PC-3 (cell line): ENCODE measurements at regions of chr22 and their contacts with region 1.

Region 1: GRCh38 chr22:25465949-25466348 is 98.5 kb upstream of the GRK3 start:
- DNase-seq: no peak
- ATAC-seq: no peak
- H3K4me3 ChIP-seq: no peak overlapping the region
- H3K27ac ChIP-seq: no peak overlapping the region
- H3K4me1 ChIP-seq: no peaks in the 10 kb centered on the region
- H3K27me3 ChIP-seq: no peaks in the 10 kb centered on the region
- CTCF ChIP-seq: no peak

Region 2: GRCh38 chr22:25362215-25362882 is 103.6 kb before region 1 on chr22:
- CTCF ChIA-PET with region 1: no interaction called
- POLR2A ChIA-PET with region 1: no interaction called
- intact Hi-C with region 1: no loop called
- DNase-seq: peak; percentile 53
- ATAC-seq: peak; percentile 57
- H3K4me3 ChIP-seq: no peak overlapping the region
- H3K27ac ChIP-seq: no peak overlapping the region
- H3K4me1 ChIP-seq: no peaks in the 10 kb centered on the region
- H3K27me3 ChIP-seq: no peaks in the 10 kb centered on the region
- CTCF ChIP-seq: peak; percentile 83

Region 3: DNA sequence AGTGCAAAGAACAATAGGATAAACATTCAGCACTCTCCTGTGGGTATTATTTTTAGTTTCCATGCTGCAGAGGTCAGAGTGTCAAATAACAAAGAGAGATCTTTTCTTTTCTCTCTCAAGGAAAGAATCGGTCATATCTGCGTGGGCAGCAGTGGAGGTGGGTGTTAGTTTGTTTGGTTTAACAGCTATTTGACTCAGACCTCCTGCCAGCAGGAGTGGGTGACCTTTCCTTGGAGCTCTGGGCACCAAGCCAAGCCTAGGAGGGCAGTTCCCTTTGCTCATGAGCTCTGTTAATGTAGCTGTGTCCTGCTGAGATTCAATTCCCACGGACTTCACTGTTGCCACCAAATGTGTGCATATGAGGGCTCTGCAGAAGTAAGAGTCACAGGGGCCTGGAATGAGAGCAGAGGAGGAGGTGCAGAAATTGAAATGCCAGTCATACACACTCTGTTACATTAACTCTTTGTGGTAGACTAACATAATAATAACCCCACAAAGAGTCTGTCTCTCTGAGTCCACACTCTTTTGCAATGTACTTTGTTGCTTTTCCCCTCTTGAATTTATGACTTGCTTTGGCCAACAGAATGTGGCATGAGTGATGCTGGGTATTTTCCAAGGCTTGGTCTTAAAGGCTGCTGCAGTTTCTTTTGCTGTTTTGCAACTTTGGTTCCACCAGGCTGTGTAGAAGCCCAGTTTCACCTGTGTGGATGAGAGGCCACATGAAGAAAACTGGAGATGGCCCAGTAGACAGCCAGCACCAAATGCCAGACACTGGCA is 22.5 kb after region 1 on chr22:
- CTCF ChIA-PET with region 1: no interaction called
- POLR2A ChIA-PET with region 1: no interaction called
- intact Hi-C with region 1: no loop called
- DNase-seq: peak; percentile 70
- ATAC-seq: peak; percentile 79
- H3K4me3 ChIP-seq: no peak overlapping the region
- H3K27ac ChIP-seq: 0 out of 2 replicates have a peak overlapping the region, but pooled peaks have one; percentile 28
- H3K4me1 ChIP-seq: 0 out of 2 replicates have a peak, but pooled peaks cover 5% of the 10 kb centered on the region
- H3K27me3 ChIP-seq: no peaks in the 10 kb centered on the region
- CTCF ChIP-seq: no peak

Region 4: GRCh38 chr22:25514436-25515180 is 48.7 kb after region 1 on chr22:
- CTCF ChIA-PET with region 1: no interaction called
- POLR2A ChIA-PET with region 1: no interaction called
- intact Hi-C with region 1: no loop called
- DNase-seq: peak; percentile 43
- ATAC-seq: peak; percentile 46
- H3K4me3 ChIP-seq: no peak overlapping the region
- H3K27ac ChIP-seq: peak overlapping the region; percentile 37; the same call in 1 of the 2 replicates
- H3K4me1 ChIP-seq: 0 out of 2 replicates have a peak, but pooled peaks cover 3% of the 10 kb centered on the region
- H3K27me3 ChIP-seq: no peaks in the 10 kb centered on the region
- CTCF ChIP-seq: no peak

Region 5: DNA sequence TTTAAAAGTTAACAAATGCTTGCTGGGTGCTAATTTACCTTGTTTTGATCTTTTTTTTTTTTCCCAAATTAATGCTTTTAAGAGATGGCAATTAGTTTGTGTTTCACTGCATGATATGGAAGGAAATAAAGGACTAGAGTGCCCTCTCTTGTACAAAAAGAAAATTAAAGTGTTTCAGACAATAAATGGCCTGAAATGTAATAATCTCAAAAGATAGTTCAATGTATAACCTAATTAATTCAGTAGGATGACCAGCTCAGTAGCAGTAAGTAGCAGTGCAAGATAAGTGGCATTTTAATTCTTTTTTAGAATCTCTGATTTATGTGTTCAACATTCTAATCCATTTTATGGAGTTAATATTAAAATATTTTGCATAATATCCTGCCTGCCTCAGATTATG is 236.1 kb after region 1 on chr22:
- CTCF ChIA-PET with region 1: no interaction called
- POLR2A ChIA-PET with region 1: no interaction called
- intact Hi-C with region 1: loop called (anchors 1 kb)
- DNase-seq: peak; percentile 11
- ATAC-seq: no peak
- H3K4me3 ChIP-seq: no peak overlapping the region
- H3K27ac ChIP-seq: no peak overlapping the region
- H3K4me1 ChIP-seq: no peaks in the 10 kb centered on the region
- H3K27me3 ChIP-seq: peaks cover 51% of the 10 kb centered on the region
- CTCF ChIP-seq: peak; percentile 46; the same call in 1 of the 2 replicates

Region 6: GRCh38 chr22:25777870-25778269 is 311.9 kb after region 1 on chr22:
- CTCF ChIA-PET with region 1: no interaction called
- POLR2A ChIA-PET with region 1: no interaction called
- intact Hi-C with region 1: loop called (anchors 5 kb)
- DNase-seq: peak; percentile 54
- ATAC-seq: peak; percentile 64
- H3K4me3 ChIP-seq: no peak overlapping the region
- H3K27ac ChIP-seq: no peak overlapping the region
- H3K4me1 ChIP-seq: no peaks in the 10 kb centered on the region
- H3K27me3 ChIP-seq: no peaks in the 10 kb centered on the region
- CTCF ChIP-seq: peak; percentile 41; the same call in 1 of the 2 replicates